ENCODE measurements at regions of chr17 and their contacts with region 1.

Region 1: GRCh38 chr17:29180034-29180787 is at the start of gene MYO18A:
- DNase-seq: peak; percentile 74
- H3K4me3 ChIP-seq: peak within 1 kb of the TSS; percentile 9 to 61 (median 42)
- H3K27ac ChIP-seq: no peak within 1 kb of the TSS
- H3K4me1 ChIP-seq: peaks cover 11% of the 10 kb centered on the region
- H3K27me3 ChIP-seq: no peaks in the 10 kb centered on the region
- CTCF ChIP-seq: peak; percentile 88 to 90
- POLR2A ChIP-seq: no peak
- total RNA-seq, gene MYO18A: 20.6 and 28.3 TPM in 2 replicates

Region 2: DNA sequence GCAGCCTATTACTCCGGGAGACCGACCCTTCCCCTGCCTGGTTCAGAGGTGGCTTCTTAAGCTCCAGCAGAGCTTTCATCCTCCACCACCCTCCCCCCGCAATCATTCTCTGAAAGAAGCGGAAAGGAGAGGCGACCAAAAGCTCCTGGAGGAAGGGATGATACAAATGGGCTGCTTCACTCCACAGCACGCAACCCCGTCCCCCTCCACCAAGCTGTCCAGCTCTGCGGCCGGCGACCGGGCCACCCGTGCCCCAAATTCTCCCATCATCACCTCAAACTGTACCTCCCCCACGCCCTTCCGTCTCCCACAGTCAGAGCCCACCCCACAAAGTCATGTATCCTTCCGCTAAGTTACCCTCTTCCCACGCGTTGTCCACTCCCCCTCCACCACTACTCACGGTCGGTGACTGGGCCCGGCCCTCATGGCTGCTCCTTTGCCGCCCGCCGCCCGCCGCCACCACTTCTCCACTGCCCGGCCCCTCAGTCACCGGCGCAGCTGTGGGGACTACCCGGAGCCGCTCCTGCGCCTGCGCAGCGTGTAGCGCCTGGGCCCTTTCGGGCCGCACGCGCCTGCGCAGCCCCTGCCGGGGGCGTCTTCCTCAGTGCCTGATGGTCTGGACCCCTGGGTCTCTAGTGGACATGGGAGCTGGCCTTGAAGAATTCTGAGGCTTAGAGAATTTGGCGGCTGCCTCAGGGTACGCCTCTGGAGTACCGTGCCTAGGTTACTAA is 337.8 kb before region 1 on chr17 and contains the start of gene FAM222B:
- CTCF ChIA-PET with region 1: no interaction called
- POLR2A ChIA-PET with region 1: no interaction called
- dilution Hi-C with region 1: no loop called
- intact Hi-C with region 1: no loop called
- DNase-seq: peak; percentile 87
- H3K4me3 ChIP-seq: peak within 1 kb of the TSS; percentile 38 to 70 (median 65)
- H3K27ac ChIP-seq: peak within 1 kb of the TSS; percentile 54
- H3K4me1 ChIP-seq: peaks cover 19% of the 10 kb centered on the region
- H3K27me3 ChIP-seq: no peaks in the 10 kb centered on the region
- CTCF ChIP-seq: no peak
- POLR2A ChIP-seq: peak; percentile 72
- total RNA-seq, gene FAM222B: 30.6 and 33.7 TPM in 2 replicates

Region 3: GRCh38 chr17:29140051-29140621 is 40.1 kb before region 1 on chr17:
- CTCF ChIA-PET with region 1: interaction called, 57 read pairs
- POLR2A ChIA-PET with region 1: no interaction called
- dilution Hi-C with region 1: no loop called
- intact Hi-C with region 1: no loop called
- DNase-seq: peak; percentile 54
- H3K4me3 ChIP-seq: peak overlapping the region in 1 of 3 experiments; percentile 4
- H3K27ac ChIP-seq: no peak overlapping the region
- H3K4me1 ChIP-seq: peaks cover 27% of the 10 kb centered on the region
- H3K27me3 ChIP-seq: no peaks in the 10 kb centered on the region
- CTCF ChIP-seq: no peak
- POLR2A ChIP-seq: no peak

Region 4: DNA sequence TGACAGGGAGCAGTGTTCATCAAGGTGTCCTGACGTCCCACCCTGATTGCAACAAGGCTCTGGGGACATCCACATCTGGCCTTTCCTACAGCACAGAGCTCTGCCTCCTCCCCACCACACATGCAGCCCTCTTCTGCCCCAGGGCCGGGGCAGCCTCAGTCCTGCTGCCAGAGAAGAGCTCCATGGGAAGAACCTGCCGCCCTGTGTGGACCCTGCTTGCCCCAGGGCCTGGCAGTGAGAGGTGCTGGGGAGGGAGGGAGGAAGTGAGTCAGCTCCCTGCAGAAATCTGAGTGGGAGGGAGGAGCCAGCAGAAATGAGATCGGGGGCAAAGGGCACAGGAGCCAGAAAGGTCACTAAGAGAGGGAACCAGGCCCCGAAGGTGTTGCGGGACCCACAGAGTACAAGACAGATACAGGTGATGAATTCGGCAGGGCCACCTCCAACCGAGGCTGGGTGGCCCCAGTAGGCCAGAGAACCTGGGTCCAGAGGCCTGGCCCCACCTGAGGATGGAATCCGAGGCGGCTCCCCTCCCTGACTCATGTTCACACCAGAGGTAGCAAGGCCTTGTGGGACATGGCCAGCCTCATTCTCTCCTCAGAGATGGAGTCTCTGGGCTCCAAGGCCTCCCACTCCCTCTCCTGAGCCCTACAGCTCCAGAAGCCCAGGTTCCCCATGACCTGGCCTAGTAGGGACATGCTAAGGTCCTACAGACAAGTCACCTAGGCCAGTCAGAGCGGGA is 24.8 kb before region 1 on chr17:
- CTCF ChIA-PET with region 1: interaction called, 242 read pairs
- POLR2A ChIA-PET with region 1: no interaction called
- dilution Hi-C with region 1: no loop called
- intact Hi-C with region 1: no loop called
- DNase-seq: peak; percentile 66
- H3K4me3 ChIP-seq: no peak overlapping the region
- H3K27ac ChIP-seq: peak overlapping the region; percentile 53
- H3K4me1 ChIP-seq: peaks cover 31% of the 10 kb centered on the region
- H3K27me3 ChIP-seq: no peaks in the 10 kb centered on the region
- CTCF ChIP-seq: no peak
- POLR2A ChIP-seq: no peak

Region 5: DNA sequence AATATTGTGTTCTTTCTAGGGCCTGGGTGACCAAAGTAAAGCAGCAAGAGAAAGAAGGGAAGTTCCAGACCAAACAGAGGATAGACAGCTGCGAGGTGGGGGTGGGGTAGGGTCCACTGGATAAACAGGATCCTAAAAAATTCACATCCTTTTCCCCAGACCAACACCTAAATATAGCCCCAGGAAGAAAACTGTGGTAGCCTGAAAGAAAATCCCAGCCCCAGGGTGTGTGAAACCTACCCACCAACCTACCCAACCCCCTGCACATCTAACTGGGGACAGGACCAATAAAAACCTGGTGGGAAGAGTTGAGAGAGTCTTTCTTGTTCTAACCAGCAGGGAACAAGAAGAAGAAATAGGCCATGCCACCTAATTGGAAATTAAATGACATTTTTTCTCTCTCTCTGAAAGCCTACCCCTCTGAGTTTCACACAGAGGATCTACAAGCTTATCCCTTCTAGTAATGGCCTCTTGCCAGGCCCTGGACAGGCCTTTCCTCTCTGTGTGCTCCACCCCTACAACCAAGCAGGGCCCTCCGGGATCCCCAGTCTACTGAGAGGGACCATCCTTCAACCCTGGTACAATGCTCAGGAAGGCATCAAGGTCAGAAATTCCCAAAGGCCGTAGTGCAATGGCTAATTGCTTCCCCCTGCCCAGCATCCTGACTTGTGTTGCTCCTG is 12.0 kb before region 1 on chr17:
- CTCF ChIA-PET with region 1: interaction called, 39 read pairs
- POLR2A ChIA-PET with region 1: no interaction called
- dilution Hi-C with region 1: no loop called
- intact Hi-C with region 1: no loop called
- DNase-seq: peak; percentile 27
- H3K4me3 ChIP-seq: no peak overlapping the region
- H3K27ac ChIP-seq: no peak overlapping the region
- H3K4me1 ChIP-seq: no peaks in the 10 kb centered on the region
- H3K27me3 ChIP-seq: no peaks in the 10 kb centered on the region
- CTCF ChIP-seq: no peak
- POLR2A ChIP-seq: no peak

Region 6: DNA sequence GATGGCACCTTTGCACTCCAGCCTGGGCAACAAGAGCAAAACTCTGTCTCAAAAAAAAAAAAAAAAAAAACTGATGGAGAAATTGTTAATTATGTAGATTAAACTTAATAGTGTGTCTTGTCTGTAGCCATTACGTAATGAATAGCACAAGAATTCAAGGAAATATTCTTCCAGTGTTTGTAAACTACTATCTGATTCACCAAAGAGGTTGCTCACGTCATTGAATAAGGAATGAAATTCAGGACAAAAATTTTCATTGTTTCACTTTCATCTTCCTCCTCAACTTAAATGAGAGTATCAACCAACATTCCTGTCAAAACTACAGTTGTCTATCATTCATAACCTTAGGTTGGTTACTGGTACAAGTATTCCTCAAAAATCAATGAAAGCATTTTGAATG is 30.7 kb after region 1 on chr17:
- CTCF ChIA-PET with region 1: interaction called, 13 read pairs
- POLR2A ChIA-PET with region 1: no interaction called
- dilution Hi-C with region 1: no loop called
- intact Hi-C with region 1: no loop called
- DNase-seq: no peak
- H3K4me3 ChIP-seq: no peak overlapping the region
- H3K27ac ChIP-seq: no peak overlapping the region
- H3K4me1 ChIP-seq: no peaks in the 10 kb centered on the region
- H3K27me3 ChIP-seq: no peaks in the 10 kb centered on the region
- CTCF ChIP-seq: no peak
- POLR2A ChIP-seq: no peak

Region 7: GRCh38 chr17:29252101-29252866 is 72.1 kb after region 1 on chr17:
- CTCF ChIA-PET with region 1: interaction called, 10 read pairs
- POLR2A ChIA-PET with region 1: no interaction called
- dilution Hi-C with region 1: no loop called
- intact Hi-C with region 1: no loop called
- DNase-seq: peak; percentile 51
- H3K4me3 ChIP-seq: no peak overlapping the region
- H3K27ac ChIP-seq: no peak overlapping the region
- H3K4me1 ChIP-seq: peaks cover 24% of the 10 kb centered on the region
- H3K27me3 ChIP-seq: no peaks in the 10 kb centered on the region
- CTCF ChIP-seq: peak; percentile 37 to 42
- POLR2A ChIP-seq: no peak

Measured in endothelial cell of umbilical vein (primary cell).